CD8-positive, alpha-beta T cell (primary cell): ENCODE measurements at regions of chr9 and their contacts with region 1.

Region 1: DNA sequence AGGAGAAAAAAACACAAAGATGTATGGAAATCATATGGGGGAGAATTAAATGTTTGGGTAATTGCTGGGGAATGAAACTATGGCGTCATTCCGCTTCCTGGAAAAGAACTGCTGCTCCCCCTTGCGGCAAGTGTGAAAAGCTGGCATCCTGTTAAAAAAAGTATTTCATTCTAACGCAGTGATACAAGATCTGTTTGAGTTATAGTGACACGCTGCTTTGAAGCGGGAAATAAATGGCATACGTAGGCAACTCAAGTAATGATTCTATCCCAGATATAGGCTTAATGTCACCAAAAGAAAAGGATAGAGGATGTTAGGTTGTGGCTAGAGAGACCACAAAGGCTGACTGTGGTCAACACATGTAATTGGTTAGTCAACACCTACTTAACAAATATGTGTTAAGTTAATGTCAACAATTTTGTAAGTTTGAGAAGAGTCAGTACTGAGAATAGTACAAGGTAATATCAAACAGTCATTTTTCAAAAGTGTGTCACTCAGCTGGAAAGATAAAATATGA is 70.2 kb upstream of the ALDH1A1 start:
- DNase-seq: peak in 7 of 9 experiments; percentile 17 to 71 (median 52)
- ATAC-seq: peak; percentile 46
- H3K4me3 ChIP-seq: no peak overlapping the region
- H3K4me3 Mint-ChIP-seq: no peak overlapping the region
- H3K27ac ChIP-seq: no peak overlapping the region
- H3K27ac Mint-ChIP-seq: no peak overlapping the region
- H3K4me1 ChIP-seq: peaks cover 3% of the 10 kb centered on the region
- H3K4me1 Mint-ChIP-seq: peaks cover 6% of the 10 kb centered on the region
- H3K27me3 ChIP-seq: no peaks in the 10 kb centered on the region
- H3K27me3 Mint-ChIP-seq: peaks cover 19% of the 10 kb centered on the region
- CTCF ChIP-seq: peak; percentile 53

Region 2: GRCh38 chr9:72038890-72039410 is 984.1 kb before region 1 on chr9:
- CTCF ChIA-PET with region 1: interaction called, 4 read pairs
- POLR2A ChIA-PET with region 1: no interaction called
- intact Hi-C with region 1: loop called in 1 of 2 experiments (anchors 2 kb)
- DNase-seq: peak; percentile 22 to 78 (median 61)
- ATAC-seq: peak; percentile 67
- H3K4me3 ChIP-seq: no peak overlapping the region
- H3K4me3 Mint-ChIP-seq: no peak overlapping the region
- H3K27ac ChIP-seq: no peak overlapping the region
- H3K27ac Mint-ChIP-seq: no peak overlapping the region
- H3K4me1 ChIP-seq: no peaks in the 10 kb centered on the region
- H3K4me1 Mint-ChIP-seq: peaks cover 5% of the 10 kb centered on the region
- H3K27me3 ChIP-seq: no peaks in the 10 kb centered on the region
- H3K27me3 Mint-ChIP-seq: peaks cover 16% of the 10 kb centered on the region
- CTCF ChIP-seq: peak; percentile 87

Region 3: DNA sequence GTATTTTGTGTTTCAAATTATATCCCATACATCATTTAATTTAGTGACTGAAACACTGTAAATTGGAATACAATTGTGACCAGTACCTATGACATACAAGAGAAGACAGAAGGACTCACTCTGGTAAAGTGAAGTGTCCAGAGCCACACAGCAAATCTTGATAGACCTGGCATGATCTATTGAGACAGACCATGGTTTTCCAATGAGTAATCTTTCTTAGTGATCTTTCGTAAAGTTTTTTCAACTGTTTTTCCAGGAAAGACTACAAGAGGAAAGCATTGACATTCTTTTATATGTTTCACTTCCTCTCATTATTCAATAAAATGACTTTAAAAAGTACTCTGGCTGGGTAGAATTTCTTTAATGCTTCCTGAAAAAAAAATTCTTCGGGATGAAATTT is 27.0 kb before region 1 on chr9:
- CTCF ChIA-PET with region 1: no interaction called
- POLR2A ChIA-PET with region 1: no interaction called
- intact Hi-C with region 1: no loop called
- DNase-seq: no peak
- ATAC-seq: no peak
- H3K4me3 ChIP-seq: no peak overlapping the region
- H3K4me3 Mint-ChIP-seq: no peak overlapping the region
- H3K27ac ChIP-seq: no peak overlapping the region
- H3K27ac Mint-ChIP-seq: no peak overlapping the region
- H3K4me1 ChIP-seq: no peaks in the 10 kb centered on the region
- H3K4me1 Mint-ChIP-seq: peaks cover 4% of the 10 kb centered on the region
- H3K27me3 ChIP-seq: no peaks in the 10 kb centered on the region
- H3K27me3 Mint-ChIP-seq: peaks cover 2% of the 10 kb centered on the region
- CTCF ChIP-seq: no peak

Region 4: GRCh38 chr9:73348471-73348870 is 325.4 kb after region 1 on chr9:
- CTCF ChIA-PET with region 1: no interaction called
- POLR2A ChIA-PET with region 1: no interaction called
- intact Hi-C with region 1: no loop called
- DNase-seq: no peak
- ATAC-seq: no peak
- H3K4me3 ChIP-seq: no peak overlapping the region
- H3K4me3 Mint-ChIP-seq: no peak overlapping the region
- H3K27ac ChIP-seq: no peak overlapping the region
- H3K27ac Mint-ChIP-seq: no peak overlapping the region
- H3K4me1 ChIP-seq: no peaks in the 10 kb centered on the region
- H3K4me1 Mint-ChIP-seq: no peaks in the 10 kb centered on the region
- H3K27me3 ChIP-seq: no peaks in the 10 kb centered on the region
- H3K27me3 Mint-ChIP-seq: no peaks in the 10 kb centered on the region
- CTCF ChIP-seq: no peak